ENCODE measurements at regions of chr6 and their contacts with region 1.

Region 1: DNA sequence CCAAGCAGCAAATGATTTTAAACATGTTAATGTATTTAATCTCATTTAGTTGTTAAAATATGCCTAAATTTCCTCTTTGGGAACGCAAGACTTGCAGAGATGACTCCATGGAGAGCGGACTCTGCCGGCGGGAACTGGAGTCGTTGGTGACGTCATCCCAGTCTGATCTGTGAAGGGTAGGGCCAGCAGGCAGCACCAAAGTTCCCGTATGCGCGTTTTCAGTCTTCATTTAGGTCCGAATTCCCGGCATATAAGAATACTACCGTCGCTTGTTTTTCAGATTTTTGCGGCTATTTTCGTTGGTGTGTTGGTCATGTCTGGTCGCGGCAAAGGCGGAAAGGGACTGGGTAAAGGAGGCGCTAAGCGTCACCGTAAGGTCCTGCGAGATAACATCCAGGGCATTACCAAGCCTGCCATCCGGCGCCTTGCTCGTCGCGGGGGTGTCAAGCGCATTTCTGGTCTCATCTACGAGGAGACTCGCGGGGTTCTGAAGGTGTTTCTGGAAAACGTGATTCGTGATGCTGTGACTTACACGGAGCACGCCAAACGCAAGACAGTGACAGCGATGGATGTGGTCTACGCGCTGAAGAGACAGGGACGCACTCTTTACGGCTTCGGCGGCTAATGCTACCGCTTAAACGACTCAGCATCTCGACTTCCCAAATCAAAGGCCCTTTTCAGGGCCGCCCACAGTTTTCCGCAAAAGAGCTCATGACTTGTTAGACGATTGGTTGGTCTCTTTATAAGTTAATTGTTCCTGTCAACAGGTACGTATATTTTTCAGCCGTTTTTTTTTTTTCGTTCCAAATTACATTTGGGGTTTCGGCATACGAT is 117.3 kb downstream of the HFE start:
- DNase-seq: peak; percentile 95
- ATAC-seq: peak; percentile 66
- H3K4me3 Mint-ChIP-seq: no peak overlapping the region
- H3K27ac Mint-ChIP-seq: no peak overlapping the region
- H3K4me1 Mint-ChIP-seq: peaks cover 41% of the 10 kb centered on the region
- H3K27me3 Mint-ChIP-seq: no peaks in the 10 kb centered on the region

Region 2: GRCh38 chr6:26087284-26088115 is 117.0 kb before region 1 on chr6 and contains the start of gene HFE:
- CTCF ChIA-PET with region 1: no interaction called
- POLR2A ChIA-PET with region 1: no interaction called
- DNase-seq: peak; percentile 50
- ATAC-seq: peak; percentile 48
- H3K4me3 Mint-ChIP-seq: peak within 1 kb of the TSS; percentile 80
- H3K27ac Mint-ChIP-seq: peak within 1 kb of the TSS; percentile 70
- H3K4me1 Mint-ChIP-seq: peaks cover 60% of the 10 kb centered on the region
- H3K27me3 Mint-ChIP-seq: peaks cover 1% of the 10 kb centered on the region
- total RNA-seq, gene HFE: 4.3 TPM

Region 3: DNA sequence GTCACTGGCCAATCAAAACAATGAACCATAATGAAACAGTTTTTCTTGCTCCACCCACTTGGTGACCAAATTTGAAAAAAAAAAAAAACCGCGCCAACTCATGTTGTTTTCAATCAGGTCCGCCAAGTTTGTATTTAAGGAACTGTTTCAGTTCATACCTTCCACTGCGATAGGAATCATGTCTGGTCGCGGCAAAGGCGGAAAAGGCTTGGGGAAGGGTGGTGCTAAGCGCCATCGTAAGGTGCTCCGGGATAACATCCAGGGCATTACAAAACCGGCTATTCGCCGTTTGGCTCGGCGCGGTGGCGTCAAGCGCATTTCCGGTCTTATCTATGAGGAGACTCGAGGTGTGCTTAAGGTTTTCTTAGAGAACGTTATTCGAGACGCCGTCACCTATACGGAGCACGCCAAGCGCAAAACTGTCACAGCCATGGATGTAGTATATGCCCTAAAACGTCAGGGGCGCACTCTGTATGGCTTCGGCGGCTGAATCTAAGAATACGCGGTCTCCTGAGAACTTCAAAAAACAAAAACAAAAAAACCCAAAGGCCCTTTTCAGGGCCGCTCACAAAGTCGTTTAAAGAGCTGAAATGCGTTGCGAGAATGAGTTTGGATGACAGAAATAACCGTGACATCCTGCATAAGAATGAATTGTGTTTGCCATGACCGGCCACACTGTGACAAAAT is 100.6 kb before region 1 on chr6:
- CTCF ChIA-PET with region 1: no interaction called
- POLR2A ChIA-PET with region 1: interaction called, 47 read pairs
- DNase-seq: peak; percentile 93
- ATAC-seq: peak; percentile 89
- H3K4me3 Mint-ChIP-seq: peak overlapping the region; percentile 85
- H3K27ac Mint-ChIP-seq: peak overlapping the region; percentile 98
- H3K4me1 Mint-ChIP-seq: peaks cover 26% of the 10 kb centered on the region
- H3K27me3 Mint-ChIP-seq: peaks cover 2% of the 10 kb centered on the region

Region 4: GRCh38 chr6:26175428-26176181 is 28.9 kb before region 1 on chr6:
- CTCF ChIA-PET with region 1: interaction called, 10 read pairs
- POLR2A ChIA-PET with region 1: interaction called, 1,978 read pairs
- DNase-seq: peak; percentile 82
- ATAC-seq: peak; percentile 11
- H3K4me3 Mint-ChIP-seq: peak overlapping the region; percentile 38
- H3K27ac Mint-ChIP-seq: peak overlapping the region; percentile 59
- H3K4me1 Mint-ChIP-seq: peaks cover 42% of the 10 kb centered on the region
- H3K27me3 Mint-ChIP-seq: no peaks in the 10 kb centered on the region

Region 5: DNA sequence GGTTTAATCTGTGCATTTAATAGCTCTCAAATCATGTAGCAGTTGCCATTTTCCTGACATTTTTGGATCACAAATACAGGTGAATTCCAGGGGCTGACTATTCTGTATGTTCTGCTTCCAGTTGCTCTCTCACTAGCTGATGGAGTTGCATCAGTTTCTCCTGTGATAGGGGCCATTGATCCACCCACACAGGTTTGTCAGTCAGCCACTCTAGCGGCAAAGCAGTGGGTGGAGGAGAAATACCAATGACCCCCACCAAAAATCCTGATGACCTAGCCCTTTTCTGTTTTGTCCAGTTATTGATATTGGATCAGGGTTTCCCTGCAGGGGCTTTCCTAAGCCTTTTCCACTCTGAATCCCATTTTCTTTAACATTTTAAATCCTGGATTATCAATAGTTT is 88.2 kb after region 1 on chr6:
- CTCF ChIA-PET with region 1: no interaction called
- POLR2A ChIA-PET with region 1: no interaction called
- DNase-seq: no peak
- ATAC-seq: no peak
- H3K4me3 Mint-ChIP-seq: no peak overlapping the region
- H3K27ac Mint-ChIP-seq: no peak overlapping the region
- H3K4me1 Mint-ChIP-seq: peaks cover 13% of the 10 kb centered on the region
- H3K27me3 Mint-ChIP-seq: peaks cover 5% of the 10 kb centered on the region

Region 6: GRCh38 chr6:27132532-27133280 is 928.2 kb after region 1 on chr6:
- CTCF ChIA-PET with region 1: no interaction called
- POLR2A ChIA-PET with region 1: interaction called, 68 read pairs
- DNase-seq: peak; percentile 95
- ATAC-seq: peak; percentile 76
- H3K4me3 Mint-ChIP-seq: no peak overlapping the region
- H3K27ac Mint-ChIP-seq: no peak overlapping the region
- H3K4me1 Mint-ChIP-seq: peaks cover 68% of the 10 kb centered on the region
- H3K27me3 Mint-ChIP-seq: no peaks in the 10 kb centered on the region

Measured in activated CD8-positive, alpha-beta T cell treated with anti-CD3 and anti-CD28 coated beads, Interleukin-2, amount 10 ng/mL, durations not matched to agents 7 days and 5 days (primary cell).